ENCODE measurements at regions of chr21 and their contacts with region 1.

Region 1: GRCh38 chr21:26572702-26573381 is at the start of gene CYYR1:
- DNase-seq: no peak
- H3K4me3 ChIP-seq: peak within 1 kb of the TSS; percentile 51 to 64 (median 55)
- H3K27ac ChIP-seq: peak within 1 kb of the TSS; percentile 50 to 77 (median 68)
- H3K4me1 ChIP-seq: peaks cover 0 to 9% (median 0%) of the 10 kb centered on the region in 3 donors
- H3K27me3 ChIP-seq: peaks cover 0 to 12% (median 0%) of the 10 kb centered on the region in 4 donors
- CTCF ChIP-seq: no peak
- POLR2A ChIP-seq: no peak
- total RNA-seq, gene CYYR1: 1.2 to 11.6 (median 5.2) TPM

Region 2: GRCh38 chr21:26405735-26406361 is 167.0 kb before region 1 on chr21:
- intact Hi-C with region 1: no loop called
- DNase-seq: no peak
- H3K4me3 ChIP-seq: peak overlapping the region in 3 of 4 donors; percentile 3 to 36 (median 17)
- H3K27ac ChIP-seq: peak overlapping the region in 3 of 4 donors; percentile 19 to 58 (median 40)
- H3K4me1 ChIP-seq: peaks cover 6 to 33% (median 8%) of the 10 kb centered on the region in 3 donors
- H3K27me3 ChIP-seq: no peaks in the 10 kb centered on the region
- CTCF ChIP-seq: no peak
- POLR2A ChIP-seq: no peak

Region 3: GRCh38 chr21:26469789-26470188 is 103.1 kb before region 1 on chr21:
- intact Hi-C with region 1: loop called (anchors 10 kb)
- DNase-seq: no peak
- H3K4me3 ChIP-seq: no peak overlapping the region
- H3K27ac ChIP-seq: no peak overlapping the region
- H3K4me1 ChIP-seq: peaks cover 0 to 9% (median 0%) of the 10 kb centered on the region in 3 donors
- H3K27me3 ChIP-seq: no peaks in the 10 kb centered on the region
- CTCF ChIP-seq: no peak
- POLR2A ChIP-seq: no peak